Right cardiac atrium (tissue), 5 donors: ENCODE measurements at regions of chr14 and their contacts with region 1.

Region 1: DNA sequence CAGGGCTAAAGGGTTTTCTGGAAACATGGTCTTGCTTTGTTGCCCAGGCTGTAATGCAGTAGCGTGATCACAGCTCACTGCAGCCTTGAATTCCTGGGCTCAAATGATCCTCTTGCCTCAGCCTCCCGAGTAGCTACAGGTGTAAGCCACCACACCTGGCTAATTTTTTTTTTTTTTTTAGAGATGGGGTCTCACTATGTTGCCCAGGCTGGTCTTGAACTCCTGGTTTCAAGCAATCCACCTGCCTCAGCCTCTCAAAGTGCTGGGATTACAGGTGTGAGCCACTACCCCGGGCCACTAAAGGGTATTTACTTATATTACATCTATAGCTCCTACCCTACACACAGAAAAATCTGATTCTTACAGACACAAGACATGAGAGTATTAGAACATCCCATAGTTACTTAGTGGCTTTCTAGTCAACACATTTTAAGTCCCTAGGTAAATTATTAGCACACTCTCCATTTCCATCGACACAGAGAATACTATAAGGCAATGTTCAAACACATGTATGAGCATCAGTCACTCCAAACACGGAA is 6.2 kb upstream of the DCAF11 start:
- DNase-seq: no peak
- ATAC-seq: peak in 1 of 2 donors; percentile 4
- H3K4me3 ChIP-seq: no peak overlapping the region
- H3K27ac ChIP-seq: no peak overlapping the region
- H3K4me1 ChIP-seq: no peaks in the 10 kb centered on the region
- H3K27me3 ChIP-seq: no peaks in the 10 kb centered on the region

Region 2: DNA sequence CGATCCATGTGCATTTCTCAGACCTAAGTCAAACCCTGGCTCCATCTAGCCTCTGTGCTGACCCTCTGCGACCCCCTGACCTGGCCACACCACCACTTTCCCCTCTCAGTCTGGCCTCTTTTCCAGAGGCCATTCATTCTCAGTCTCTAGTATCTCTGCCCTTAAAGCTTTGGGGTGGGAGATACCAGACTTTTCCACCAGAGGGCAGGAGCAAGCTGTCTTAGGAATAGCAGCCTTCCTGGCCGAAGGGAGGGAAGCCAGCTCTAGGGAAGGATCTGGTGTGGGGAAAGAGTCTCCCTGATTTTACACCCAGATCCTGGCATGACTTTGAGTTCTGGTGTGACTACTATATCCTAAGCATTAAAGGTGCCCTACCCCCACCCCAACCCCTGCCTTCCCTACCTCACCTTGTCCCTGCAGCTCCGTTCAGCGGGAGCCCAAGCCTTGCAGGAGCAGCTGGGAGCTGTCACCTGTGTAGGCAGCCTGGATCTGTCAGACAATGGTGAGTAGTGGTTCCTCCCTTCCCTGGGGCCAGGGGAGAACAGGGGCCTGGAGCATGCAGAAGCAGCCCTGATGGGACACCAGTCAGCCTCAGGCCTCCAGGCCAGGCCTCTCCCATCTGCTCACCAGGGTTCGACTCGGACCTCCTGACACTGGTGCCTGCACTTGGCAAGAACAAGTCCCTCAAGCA is 50.0 kb before region 1 on chr14:
- intact Hi-C with region 1: loop called in 3 of 4 experiments (anchors 5 to 10 kb)
- DNase-seq: peak in 2 of 3 donors; percentile 63 to 83
- ATAC-seq: peak; percentile 72 to 74
- H3K4me3 ChIP-seq: no peak overlapping the region
- H3K27ac ChIP-seq: no peak overlapping the region
- H3K4me1 ChIP-seq: no peaks in the 10 kb centered on the region
- H3K27me3 ChIP-seq: no peaks in the 10 kb centered on the region